ENCODE measurements at regions of chr7 and their contacts with region 1.

Region 1: DNA sequence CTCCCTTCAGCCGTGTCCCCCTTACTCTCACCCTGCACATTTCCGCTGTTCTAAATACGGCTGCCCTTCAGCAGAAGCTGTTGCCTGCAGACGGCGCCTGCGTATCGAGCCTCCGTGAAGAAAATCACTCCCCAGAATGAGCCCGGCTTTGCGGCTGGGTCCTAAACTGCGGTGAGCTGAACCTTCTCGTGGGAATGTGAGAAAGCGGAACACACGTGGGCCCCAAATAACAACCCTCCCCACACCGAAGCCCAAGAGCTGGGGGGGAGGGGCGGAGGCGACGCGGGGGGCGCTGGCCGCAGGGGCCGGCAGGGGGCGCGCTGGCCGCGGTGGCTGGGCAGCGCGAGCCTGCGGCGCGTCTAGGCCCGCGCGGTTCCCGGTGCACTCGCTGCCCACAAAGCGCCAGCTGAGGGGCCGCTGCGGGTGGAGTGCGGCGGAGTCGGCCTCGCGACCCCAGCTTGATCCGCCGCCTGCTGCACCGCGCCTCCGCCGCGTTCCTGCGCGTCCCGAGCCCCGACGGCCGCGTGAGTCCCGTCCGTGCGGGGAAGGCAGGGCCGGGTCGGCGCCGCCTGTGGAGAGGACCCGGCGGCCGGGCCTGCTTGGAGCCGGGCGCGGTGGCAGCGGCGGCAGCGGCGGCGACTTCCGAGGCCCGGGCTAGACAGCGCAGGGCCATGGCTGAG is at the start of gene ZNF398:
- DNase-seq: peak; percentile 69
- ATAC-seq: peak; percentile 78
- H3K4me3 ChIP-seq: peak within 1 kb of the TSS; percentile 80
- H3K27ac ChIP-seq: peak within 1 kb of the TSS; percentile 94
- H3K4me1 ChIP-seq: peaks cover 5% of the 10 kb centered on the region
- H3K27me3 ChIP-seq: no peaks in the 10 kb centered on the region
- CTCF ChIP-seq: peak; percentile 57 to 67 (median 60); a peak in 5 of 6 replicates
- EP300 ChIP-seq: peak in 1 of 2 experiments; percentile 63; a peak in 2 of 4 replicates
- POLR2A ChIP-seq: peak; percentile 86
- RAD21 ChIP-seq: no peak
- polyA plus RNA-seq, gene ZNF398: 2.3 to 2.5 TPM

Region 2: GRCh38 chr7:149036676-149037075 is 110.5 kb before region 1 on chr7:
- CTCF ChIA-PET with region 1: no interaction called
- POLR2A ChIA-PET with region 1: no interaction called
- RAD21 ChIA-PET with region 1: no interaction called
- SMC1A ChIA-PET with region 1: no interaction called
- in situ Hi-C with region 1: no loop called
- intact Hi-C with region 1: no loop called
- DNase-seq: no peak
- ATAC-seq: no peak
- H3K4me3 ChIP-seq: no peak overlapping the region
- H3K27ac ChIP-seq: no peak overlapping the region
- H3K4me1 ChIP-seq: no peaks in the 10 kb centered on the region
- H3K27me3 ChIP-seq: no peaks in the 10 kb centered on the region; a peak in 1 of 4 replicates
- CTCF ChIP-seq: no peak
- EP300 ChIP-seq: no peak
- POLR2A ChIP-seq: no peak
- RAD21 ChIP-seq: no peak

Region 3: DNA sequence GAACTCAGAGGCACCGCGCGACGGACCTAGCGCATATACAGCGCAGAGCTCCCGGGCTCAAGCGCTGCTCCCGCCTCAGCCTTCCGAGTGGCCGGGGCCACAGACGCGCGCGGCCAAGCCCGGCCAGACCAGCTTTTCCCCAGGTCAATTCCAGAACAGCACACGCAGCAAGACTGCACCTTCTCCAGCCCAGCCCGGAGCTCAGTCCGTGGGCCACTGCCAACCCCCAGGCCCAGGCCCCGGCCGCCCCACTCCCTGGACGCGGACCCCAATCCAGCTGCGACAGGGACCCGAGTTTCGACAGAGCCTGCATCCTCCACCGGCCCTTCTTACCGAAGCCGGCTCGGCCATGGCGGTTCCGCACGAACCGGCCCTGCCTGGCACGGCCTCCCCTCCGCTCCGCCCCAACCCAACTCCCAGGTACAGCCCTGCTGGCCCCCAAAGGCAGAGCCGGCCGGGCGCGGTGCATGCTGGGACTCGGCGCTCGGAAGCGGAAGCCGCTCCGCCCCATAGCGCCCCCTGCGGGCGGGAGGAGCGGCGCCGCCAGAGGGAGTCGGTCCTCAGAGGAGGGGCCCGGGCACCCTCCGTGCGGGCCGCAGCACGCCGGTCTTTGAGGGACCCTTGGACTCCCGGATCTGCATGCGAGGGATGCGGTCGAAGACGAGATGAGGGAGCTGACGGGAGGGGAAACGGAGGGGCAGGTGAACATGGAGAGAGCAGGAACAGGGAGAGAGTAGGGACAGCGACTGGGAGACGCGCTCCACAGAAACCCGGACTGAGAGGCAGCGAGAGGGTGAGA is 21.1 kb before region 1 on chr7 and contains the start of gene ZNF425:
- CTCF ChIA-PET with region 1: interaction called, 37 read pairs
- POLR2A ChIA-PET with region 1: interaction called, 31 read pairs
- RAD21 ChIA-PET with region 1: interaction called, 20 read pairs
- SMC1A ChIA-PET with region 1: interaction called, 4 read pairs
- in situ Hi-C with region 1: no loop called
- intact Hi-C with region 1: loop called (anchors 1 kb)
- DNase-seq: peak; percentile 66
- ATAC-seq: peak; percentile 92
- H3K4me3 ChIP-seq: peak within 1 kb of the TSS; percentile 96
- H3K27ac ChIP-seq: peak within 1 kb of the TSS; percentile 90
- H3K4me1 ChIP-seq: no peaks in the 10 kb centered on the region
- H3K27me3 ChIP-seq: no peaks in the 10 kb centered on the region
- CTCF ChIP-seq: peak; percentile 87 to 96 (median 92)
- EP300 ChIP-seq: no peak
- POLR2A ChIP-seq: peak; percentile 99
- RAD21 ChIP-seq: peak; percentile 32; the same call in 1 of the 2 replicates
- polyA plus RNA-seq, gene ZNF425: 0.19 to 0.20 TPM

Region 4: GRCh38 chr7:149195180-149196150 is 48.3 kb after region 1 on chr7 and contains the start of gene ZNF282:
- CTCF ChIA-PET with region 1: interaction called, 11 read pairs
- POLR2A ChIA-PET with region 1: interaction called, 20 read pairs
- RAD21 ChIA-PET with region 1: interaction called, 15 read pairs
- SMC1A ChIA-PET with region 1: interaction called, 3 read pairs
- in situ Hi-C with region 1: no loop called
- intact Hi-C with region 1: loop called (anchors 2 kb)
- DNase-seq: peak; percentile 31
- ATAC-seq: peak; percentile 94
- H3K4me3 ChIP-seq: peak within 1 kb of the TSS; percentile 89
- H3K27ac ChIP-seq: peak within 1 kb of the TSS; percentile 82
- H3K4me1 ChIP-seq: 0 out of 2 replicates have a peak, but pooled peaks cover 3% of the 10 kb centered on the region
- H3K27me3 ChIP-seq: no peaks in the 10 kb centered on the region
- CTCF ChIP-seq: peak; percentile 52 to 70 (median 68)
- EP300 ChIP-seq: no peak
- POLR2A ChIP-seq: peak; percentile 88
- RAD21 ChIP-seq: peak; percentile 38; the same call in 1 of the 2 replicates
- polyA plus RNA-seq, gene ZNF282: 0.35 to 0.84 TPM

Region 5: DNA sequence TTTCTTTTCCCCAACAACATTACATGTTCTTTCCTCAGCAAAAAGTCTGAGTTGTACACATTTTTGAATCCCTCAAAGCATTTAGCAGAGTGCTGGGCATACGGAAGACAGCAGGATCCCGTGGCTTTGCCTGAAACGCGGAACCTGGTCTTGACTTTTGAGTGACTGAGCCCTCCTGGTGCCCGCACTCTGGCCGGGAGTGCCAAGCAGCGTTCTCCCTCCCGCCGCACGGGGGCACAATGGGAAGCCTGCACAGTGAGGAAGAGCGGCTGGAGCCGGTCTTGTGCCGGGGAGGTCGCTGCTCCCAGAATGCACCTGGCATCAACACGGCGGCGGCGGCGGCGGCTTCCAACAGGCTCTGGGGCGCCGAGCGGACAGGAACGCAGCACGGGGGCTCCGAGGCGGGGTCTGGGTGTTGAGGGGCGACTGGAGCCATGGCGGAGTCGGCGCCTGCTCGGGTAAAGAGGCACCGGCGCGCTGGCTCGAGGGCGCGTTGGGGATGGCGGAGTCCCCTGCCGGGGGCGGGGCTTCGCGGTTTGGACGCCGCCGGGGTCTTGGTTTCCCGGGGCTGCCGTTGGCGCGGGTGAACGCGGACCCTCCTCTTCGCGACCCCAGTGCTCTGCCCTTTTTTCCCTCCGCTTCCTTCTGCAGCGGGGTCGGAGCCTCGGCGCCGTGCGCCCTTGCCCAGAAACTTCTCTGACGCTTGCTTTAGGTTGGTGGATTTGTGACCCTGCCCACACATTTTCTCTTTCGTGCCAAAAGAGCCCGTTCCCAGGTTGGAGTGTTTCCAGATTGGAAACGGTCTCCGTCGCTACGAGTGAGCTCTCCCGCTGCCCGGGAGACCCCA is 92.4 kb after region 1 on chr7 and contains the start of gene ZNF212:
- CTCF ChIA-PET with region 1: no interaction called
- POLR2A ChIA-PET with region 1: no interaction called
- RAD21 ChIA-PET with region 1: no interaction called
- SMC1A ChIA-PET with region 1: no interaction called
- in situ Hi-C with region 1: no loop called
- intact Hi-C with region 1: loop called (anchors 5 kb)
- DNase-seq: peak; percentile 56
- ATAC-seq: peak; percentile 99
- H3K4me3 ChIP-seq: peak within 1 kb of the TSS; percentile 99
- H3K27ac ChIP-seq: peak within 1 kb of the TSS; percentile 73
- H3K4me1 ChIP-seq: peaks cover 10% of the 10 kb centered on the region
- H3K27me3 ChIP-seq: no peaks in the 10 kb centered on the region
- CTCF ChIP-seq: peak; percentile 87 to 96 (median 92); a peak in 5 of 6 replicates
- EP300 ChIP-seq: no peak
- POLR2A ChIP-seq: peak; percentile 84
- RAD21 ChIP-seq: peak; percentile 51
- polyA plus RNA-seq, gene ZNF212: 1.2 to 2.1 TPM

Region 6: DNA sequence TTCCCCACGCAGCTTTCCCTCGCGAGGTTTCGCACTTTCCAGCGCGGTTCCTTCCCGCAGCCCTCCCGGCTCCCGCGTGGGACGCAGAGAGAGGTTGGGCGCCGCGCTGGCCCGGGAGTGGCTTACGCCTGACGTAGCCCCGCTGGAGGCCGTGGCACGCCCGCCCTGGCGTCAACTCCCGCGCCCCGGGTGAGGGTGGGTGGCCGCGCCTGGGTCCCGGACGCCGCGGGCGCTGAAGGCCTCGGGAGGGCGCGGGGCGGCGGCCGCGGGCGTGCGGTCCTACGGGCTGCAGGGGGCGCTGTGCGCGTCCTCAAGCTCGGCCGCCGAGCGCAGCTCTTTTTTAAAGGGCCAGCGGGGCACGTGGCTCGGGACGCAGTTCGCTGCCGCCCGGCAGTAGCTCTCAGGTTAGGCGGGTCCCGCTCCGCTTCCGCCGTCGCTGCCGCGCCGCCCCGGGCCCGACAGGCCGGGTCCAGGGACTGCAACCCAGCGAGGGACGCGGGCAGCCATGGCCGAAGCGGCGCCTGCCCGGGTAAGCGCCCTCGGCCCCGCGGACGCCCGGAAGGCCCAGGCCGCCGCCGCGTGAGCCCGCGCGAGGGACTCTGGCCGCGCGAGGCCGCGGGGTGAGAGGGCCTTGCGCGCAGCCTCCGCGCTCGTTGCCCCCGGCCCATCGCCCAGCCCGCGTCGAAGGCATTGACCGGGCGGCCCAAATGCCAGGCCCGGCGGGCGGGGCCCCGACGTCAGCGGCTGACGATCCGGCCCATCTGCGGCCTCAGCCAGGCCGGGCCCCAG is 114.8 kb after region 1 on chr7 and contains the start of gene ZNF783:
- CTCF ChIA-PET with region 1: interaction called, 3 read pairs
- POLR2A ChIA-PET with region 1: interaction called, 10 read pairs
- RAD21 ChIA-PET with region 1: interaction called, 3 read pairs
- SMC1A ChIA-PET with region 1: no interaction called
- in situ Hi-C with region 1: no loop called
- intact Hi-C with region 1: no loop called
- DNase-seq: peak; percentile 32
- ATAC-seq: peak; percentile 96
- H3K4me3 ChIP-seq: peak within 1 kb of the TSS; percentile 83
- H3K27ac ChIP-seq: 0 out of 2 replicates have a peak within 1 kb of the TSS, but pooled peaks have one; percentile 6
- H3K4me1 ChIP-seq: peaks cover 6% of the 10 kb centered on the region
- H3K27me3 ChIP-seq: no peaks in the 10 kb centered on the region
- CTCF ChIP-seq: peak; percentile 67 to 90 (median 71); a peak in 5 of 6 replicates
- EP300 ChIP-seq: no peak
- POLR2A ChIP-seq: peak; percentile 79
- RAD21 ChIP-seq: no peak
- polyA plus RNA-seq, gene ZNF783: 2.0 to 2.8 TPM

Region 7: GRCh38 chr7:149348758-149349369 is 201.7 kb after region 1 on chr7:
- CTCF ChIA-PET with region 1: no interaction called
- POLR2A ChIA-PET with region 1: no interaction called
- RAD21 ChIA-PET with region 1: no interaction called
- SMC1A ChIA-PET with region 1: no interaction called
- in situ Hi-C with region 1: no loop called
- intact Hi-C with region 1: no loop called
- DNase-seq: no peak
- ATAC-seq: no peak
- H3K4me3 ChIP-seq: no peak overlapping the region
- H3K27ac ChIP-seq: no peak overlapping the region
- H3K4me1 ChIP-seq: no peaks in the 10 kb centered on the region
- H3K27me3 ChIP-seq: no peaks in the 10 kb centered on the region
- CTCF ChIP-seq: no peak
- EP300 ChIP-seq: no peak
- POLR2A ChIP-seq: no peak
- RAD21 ChIP-seq: no peak

Region 8: DNA sequence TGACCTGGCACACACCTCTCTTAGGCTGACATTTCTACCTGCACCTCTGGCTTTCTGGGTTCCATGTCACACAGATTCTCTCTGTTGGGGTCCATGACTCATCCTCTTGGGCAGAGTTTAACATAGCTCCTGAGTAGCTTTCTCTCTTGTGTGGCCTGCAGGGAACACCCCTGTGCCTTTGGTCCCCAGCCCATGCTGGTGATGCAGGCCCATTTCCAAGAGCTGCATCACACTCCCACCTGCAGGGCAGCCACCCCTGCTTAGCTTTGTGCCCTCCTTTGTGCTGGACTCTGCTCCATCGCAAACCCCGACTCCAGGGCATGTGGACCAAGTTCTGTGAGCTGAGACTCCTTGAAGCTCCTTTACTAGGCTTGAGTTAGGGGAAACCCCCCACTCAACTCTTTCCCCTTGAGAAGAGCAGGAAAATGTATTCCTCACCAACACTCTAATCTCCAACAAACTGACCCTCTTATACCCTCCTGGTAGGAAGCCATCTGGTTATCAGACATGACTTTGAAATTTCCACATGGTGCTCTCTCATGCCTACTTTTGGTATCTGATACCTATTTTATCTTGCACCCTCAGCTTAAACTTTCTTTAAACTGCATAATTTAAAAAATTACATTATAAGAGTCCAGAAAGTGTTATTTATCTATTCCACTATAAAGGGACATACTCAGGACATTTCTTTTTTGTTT is 220.4 kb after region 1 on chr7:
- CTCF ChIA-PET with region 1: no interaction called
- POLR2A ChIA-PET with region 1: no interaction called
- RAD21 ChIA-PET with region 1: no interaction called
- SMC1A ChIA-PET with region 1: no interaction called
- in situ Hi-C with region 1: no loop called
- intact Hi-C with region 1: no loop called
- DNase-seq: no peak
- ATAC-seq: no peak
- H3K4me3 ChIP-seq: no peak overlapping the region
- H3K27ac ChIP-seq: no peak overlapping the region
- H3K4me1 ChIP-seq: no peaks in the 10 kb centered on the region
- H3K27me3 ChIP-seq: no peaks in the 10 kb centered on the region
- CTCF ChIP-seq: no peak
- EP300 ChIP-seq: no peak
- POLR2A ChIP-seq: no peak
- RAD21 ChIP-seq: no peak

Region 9: DNA sequence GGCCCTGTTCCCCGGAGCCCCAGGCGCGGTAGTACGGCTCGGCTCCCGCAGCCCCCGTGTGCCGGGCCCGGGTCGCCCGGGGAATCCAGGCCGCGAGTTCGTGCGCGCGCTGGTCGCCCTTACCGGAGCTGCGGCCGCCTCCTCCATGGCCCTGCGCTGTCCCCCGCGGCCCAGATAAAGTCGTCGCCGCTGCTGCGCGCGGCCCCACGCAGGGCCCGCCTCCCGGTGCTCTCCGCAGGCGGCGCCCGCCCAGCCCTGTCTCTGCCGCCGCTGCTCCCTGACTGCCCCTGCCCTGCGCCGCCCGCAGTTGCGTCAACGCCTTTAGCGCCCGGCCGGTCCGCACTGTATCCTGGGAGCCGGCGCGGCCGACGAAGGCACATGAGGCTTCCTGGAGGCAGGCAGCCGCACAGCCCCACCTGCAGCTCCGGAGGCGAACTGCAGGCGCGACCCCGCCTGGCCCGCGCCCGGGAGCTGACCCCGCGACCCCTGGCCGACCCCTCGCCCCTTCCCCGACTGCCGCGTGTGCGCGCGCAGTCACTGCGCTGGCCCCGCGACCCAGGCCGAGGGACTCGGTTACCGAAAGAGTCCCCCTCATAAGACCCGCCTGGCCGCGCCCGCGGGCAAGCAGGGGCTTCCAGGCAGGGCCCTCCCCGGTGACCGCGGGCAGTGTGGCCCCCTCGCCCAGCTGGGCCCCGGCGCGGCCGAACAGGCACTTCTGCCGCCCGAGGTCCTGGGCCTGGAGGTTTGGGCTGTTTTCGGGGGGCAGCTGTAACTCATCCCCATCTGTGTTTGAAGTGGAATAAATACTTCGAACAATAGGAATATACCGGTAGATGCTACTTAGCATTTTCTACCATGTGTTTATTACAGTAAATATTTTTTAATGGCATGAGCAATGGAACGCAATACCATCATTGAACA is 477.5 kb after region 1 on chr7:
- CTCF ChIA-PET with region 1: no interaction called
- POLR2A ChIA-PET with region 1: no interaction called
- RAD21 ChIA-PET with region 1: no interaction called
- SMC1A ChIA-PET with region 1: no interaction called
- in situ Hi-C with region 1: no loop called
- intact Hi-C with region 1: loop called (anchors 5 kb)
- DNase-seq: peak; percentile 50
- ATAC-seq: peak; percentile 92
- H3K4me3 ChIP-seq: peak overlapping the region; percentile 99
- H3K27ac ChIP-seq: peak overlapping the region; percentile 74
- H3K4me1 ChIP-seq: peaks cover 24% of the 10 kb centered on the region
- H3K27me3 ChIP-seq: peaks cover 0 to 3% of the 10 kb centered on the region in 2 experiments; a peak in 2 of 4 replicates
- CTCF ChIP-seq: peak; percentile 78 to 88 (median 84)
- EP300 ChIP-seq: no peak
- POLR2A ChIP-seq: peak; percentile 97
- RAD21 ChIP-seq: peak; percentile 44

Measured in GM12878 (cell line).